Astrocyte of the cerebellum (primary cell): ENCODE measurements at regions of chr12 and their contacts with region 1.

Region 1: GRCh38 chr12:42589465-42590329 is at the start of gene PRICKLE1:
- DNase-seq: peak; percentile 32
- H3K4me3 ChIP-seq: peak within 1 kb of the TSS; percentile 98
- CTCF ChIP-seq: no peak

Region 2: GRCh38 chr12:42625611-42626010 is 35.9 kb after region 1 on chr12:
- in situ Hi-C with region 1: loop called (anchors 5 kb)
- DNase-seq: no peak
- H3K4me3 ChIP-seq: no peak overlapping the region
- CTCF ChIP-seq: no peak